ENCODE measurements at regions of chr9 and their contacts with region 1.

Region 1: DNA sequence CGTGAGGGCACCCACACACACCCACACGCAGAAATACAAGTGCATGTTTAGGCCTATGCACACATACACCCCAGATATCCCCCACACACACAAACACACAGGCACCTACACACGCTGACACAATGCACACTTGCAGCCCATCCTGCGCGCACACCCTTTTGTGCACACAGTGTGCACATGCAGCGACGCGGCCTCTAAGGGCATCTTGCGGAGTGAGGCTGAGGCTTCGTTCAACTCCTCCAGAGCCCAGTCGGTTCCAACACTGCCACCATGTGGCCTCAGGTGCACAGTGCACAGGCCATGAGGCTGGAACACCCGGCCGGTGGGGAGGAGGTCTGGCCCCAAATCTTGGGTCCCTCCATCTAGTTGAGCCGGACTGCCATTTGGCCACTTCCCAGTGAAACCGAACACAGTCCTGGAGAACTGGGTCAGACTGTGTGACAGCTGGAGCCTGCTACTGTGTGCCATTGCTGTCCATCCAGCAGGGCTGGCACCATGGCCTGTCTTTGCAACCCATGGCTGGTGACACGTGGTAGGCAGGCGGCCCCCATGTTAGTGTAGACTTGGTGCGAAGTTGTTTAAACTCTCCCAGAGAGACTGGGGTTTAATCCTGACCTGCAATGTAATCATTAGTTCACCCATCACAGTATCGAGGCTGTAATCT is 97.7 kb upstream of the MVB12B start:
- H3K4me3 Mint-ChIP-seq: no peak overlapping the region
- H3K27ac Mint-ChIP-seq: no peak overlapping the region
- H3K4me1 Mint-ChIP-seq: no peaks in the 10 kb centered on the region
- H3K27me3 Mint-ChIP-seq: peaks cover 43% of the 10 kb centered on the region

Region 2: GRCh38 chr9:125407974-125408900 is 820.7 kb before region 1 on chr9:
- intact Hi-C with region 1: loop called (anchors 1 kb)
- H3K4me3 Mint-ChIP-seq: peak overlapping the region; percentile 78
- H3K27ac Mint-ChIP-seq: peak overlapping the region; percentile 49
- H3K4me1 Mint-ChIP-seq: peaks cover 31% of the 10 kb centered on the region
- H3K27me3 Mint-ChIP-seq: peaks cover 53% of the 10 kb centered on the region

Region 3: GRCh38 chr9:125558453-125559092 is 670.3 kb before region 1 on chr9:
- intact Hi-C with region 1: loop called (anchors 5 kb)
- H3K4me3 Mint-ChIP-seq: no peak overlapping the region
- H3K27ac Mint-ChIP-seq: no peak overlapping the region
- H3K4me1 Mint-ChIP-seq: no peaks in the 10 kb centered on the region
- H3K27me3 Mint-ChIP-seq: no peaks in the 10 kb centered on the region